Caco-2 (cell line): ENCODE measurements at regions of chr6 and their contacts with region 1.

Region 1: DNA sequence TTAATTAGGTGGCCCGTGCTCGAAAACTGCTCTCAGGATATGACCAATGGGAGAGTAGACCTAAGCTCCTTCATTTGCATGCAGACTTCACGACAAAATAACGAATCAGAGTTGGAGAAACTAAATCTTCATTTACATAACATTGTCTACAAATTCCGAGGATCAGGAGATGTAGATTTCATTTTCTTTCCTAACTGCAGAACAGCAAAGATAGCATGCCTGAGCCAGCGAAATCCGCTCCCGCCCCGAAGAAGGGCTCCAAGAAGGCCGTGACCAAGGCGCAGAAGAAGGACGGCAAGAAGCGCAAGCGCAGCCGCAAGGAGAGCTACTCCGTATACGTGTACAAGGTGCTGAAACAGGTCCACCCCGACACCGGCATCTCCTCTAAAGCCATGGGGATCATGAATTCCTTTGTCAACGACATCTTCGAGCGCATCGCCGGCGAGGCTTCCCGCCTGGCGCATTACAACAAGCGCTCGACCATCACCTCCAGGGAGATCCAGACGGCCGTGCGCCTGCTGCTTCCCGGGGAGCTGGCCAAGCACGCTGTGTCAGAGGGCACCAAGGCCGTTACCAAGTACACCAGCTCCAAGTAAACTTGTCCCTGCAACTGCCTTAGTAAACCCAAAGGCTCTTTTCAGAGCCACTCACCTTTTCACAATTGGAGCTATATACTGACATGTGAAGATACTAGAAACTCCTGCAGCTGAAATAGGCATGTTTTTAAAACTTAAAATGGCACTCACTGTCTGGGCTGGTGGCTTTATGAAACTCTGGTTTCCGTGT is 96.5 kb downstream of the HFE start:
- DNase-seq: peak; percentile 61 to 63
- H3K4me3 ChIP-seq: peak overlapping the region; percentile 41
- H3K4me3 Mint-ChIP-seq: peak overlapping the region; percentile 52
- H3K27ac Mint-ChIP-seq: peak overlapping the region; percentile 88
- H3K4me1 ChIP-seq: peaks cover 3% of the 10 kb centered on the region; the same call in 1 of the 2 replicates
- H3K4me1 Mint-ChIP-seq: peaks cover 25% of the 10 kb centered on the region
- H3K27me3 ChIP-seq: no peaks in the 10 kb centered on the region
- H3K27me3 Mint-ChIP-seq: no peaks in the 10 kb centered on the region
- CTCF ChIP-seq: no peak

Region 2: DNA sequence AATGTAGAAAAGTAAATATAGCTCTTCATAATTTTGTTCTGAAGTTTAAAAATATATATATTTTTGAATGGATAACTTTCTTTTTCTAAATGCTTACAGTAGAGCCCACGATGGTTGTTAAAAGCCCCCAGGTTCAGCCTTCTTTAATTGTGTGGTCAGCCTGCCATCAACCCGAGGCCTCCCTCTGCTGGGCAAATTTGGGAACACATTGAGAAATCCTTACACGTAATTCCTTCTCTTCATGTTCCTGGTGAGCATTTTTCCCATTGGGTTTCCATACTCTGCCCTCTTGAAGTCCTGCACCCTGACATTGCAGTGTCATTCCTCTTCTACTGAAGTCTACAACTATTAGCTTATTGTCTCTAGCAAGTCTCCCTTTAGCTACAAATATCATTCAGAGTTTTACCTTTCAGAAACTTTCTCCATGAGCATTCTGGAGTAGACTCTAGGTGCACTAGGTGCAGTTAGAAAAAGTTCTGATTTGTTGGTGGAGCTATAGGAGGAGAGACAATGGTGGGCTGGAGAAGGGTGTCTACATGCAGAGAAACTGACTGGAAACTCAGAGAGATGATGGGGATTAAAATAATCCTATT is 180.6 kb before region 1 on chr6:
- CTCF ChIA-PET with region 1: no interaction called
- POLR2A ChIA-PET with region 1: no interaction called
- intact Hi-C with region 1: no loop called
- DNase-seq: peak; percentile 49 to 79
- H3K4me3 ChIP-seq: no peak overlapping the region
- H3K4me3 Mint-ChIP-seq: no peak overlapping the region
- H3K27ac Mint-ChIP-seq: no peak overlapping the region
- H3K4me1 ChIP-seq: no peaks in the 10 kb centered on the region
- H3K4me1 Mint-ChIP-seq: peaks cover 13% of the 10 kb centered on the region
- H3K27me3 ChIP-seq: no peaks in the 10 kb centered on the region
- H3K27me3 Mint-ChIP-seq: no peaks in the 10 kb centered on the region
- CTCF ChIP-seq: peak; percentile 77 to 90

Region 3: DNA sequence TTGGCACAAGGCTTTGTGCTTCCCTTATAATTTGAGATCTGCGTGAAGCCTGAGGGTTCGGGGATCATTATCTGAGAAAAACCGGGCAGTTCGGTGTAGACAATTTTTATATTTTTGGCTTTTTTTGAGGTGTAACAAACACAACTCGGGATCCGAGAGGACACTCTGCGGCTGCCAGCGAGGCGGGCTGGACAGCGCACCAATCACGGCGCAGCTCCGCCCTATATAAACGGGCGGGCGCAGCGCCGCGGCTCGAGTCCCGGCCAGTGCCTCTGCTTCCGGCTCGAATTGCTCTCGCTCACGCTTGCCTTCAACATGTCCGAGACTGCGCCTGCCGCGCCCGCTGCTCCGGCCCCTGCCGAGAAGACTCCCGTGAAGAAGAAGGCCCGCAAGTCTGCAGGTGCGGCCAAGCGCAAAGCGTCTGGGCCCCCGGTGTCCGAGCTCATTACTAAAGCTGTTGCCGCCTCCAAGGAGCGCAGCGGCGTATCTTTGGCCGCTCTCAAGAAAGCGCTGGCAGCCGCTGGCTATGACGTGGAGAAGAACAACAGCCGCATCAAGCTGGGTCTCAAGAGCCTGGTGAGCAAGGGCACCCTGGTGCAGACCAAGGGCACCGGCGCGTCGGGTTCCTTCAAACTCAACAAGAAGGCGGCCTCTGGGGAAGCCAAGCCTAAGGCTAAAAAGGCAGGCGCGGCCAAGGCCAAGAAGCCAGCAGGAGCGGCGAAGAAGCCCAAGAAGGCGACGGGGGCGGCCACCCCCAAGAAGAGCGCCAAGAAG is 27.5 kb before region 1 on chr6:
- CTCF ChIA-PET with region 1: no interaction called
- POLR2A ChIA-PET with region 1: interaction called, 45 read pairs
- intact Hi-C with region 1: loop called (anchors 2 kb)
- DNase-seq: peak; percentile 86 to 93
- H3K4me3 ChIP-seq: peak overlapping the region; percentile 64
- H3K4me3 Mint-ChIP-seq: peak overlapping the region; percentile 86
- H3K27ac Mint-ChIP-seq: peak overlapping the region; percentile 98
- H3K4me1 ChIP-seq: peaks cover 10% of the 10 kb centered on the region
- H3K4me1 Mint-ChIP-seq: peaks cover 45% of the 10 kb centered on the region
- H3K27me3 ChIP-seq: no peaks in the 10 kb centered on the region
- H3K27me3 Mint-ChIP-seq: peaks cover 15% of the 10 kb centered on the region
- CTCF ChIP-seq: no peak

Region 4: GRCh38 chr6:26172496-26172958 is 11.2 kb before region 1 on chr6:
- CTCF ChIA-PET with region 1: interaction called, 4 read pairs
- POLR2A ChIA-PET with region 1: interaction called, 6 read pairs
- intact Hi-C with region 1: loop called (anchors 1 kb)
- DNase-seq: no peak
- H3K4me3 ChIP-seq: peak overlapping the region; percentile 53
- H3K4me3 Mint-ChIP-seq: peak overlapping the region; percentile 68
- H3K27ac Mint-ChIP-seq: peak overlapping the region; percentile 37
- H3K4me1 ChIP-seq: peaks cover 6% of the 10 kb centered on the region
- H3K4me1 Mint-ChIP-seq: peaks cover 10% of the 10 kb centered on the region
- H3K27me3 ChIP-seq: no peaks in the 10 kb centered on the region
- H3K27me3 Mint-ChIP-seq: no peaks in the 10 kb centered on the region
- CTCF ChIP-seq: no peak

Region 5: DNA sequence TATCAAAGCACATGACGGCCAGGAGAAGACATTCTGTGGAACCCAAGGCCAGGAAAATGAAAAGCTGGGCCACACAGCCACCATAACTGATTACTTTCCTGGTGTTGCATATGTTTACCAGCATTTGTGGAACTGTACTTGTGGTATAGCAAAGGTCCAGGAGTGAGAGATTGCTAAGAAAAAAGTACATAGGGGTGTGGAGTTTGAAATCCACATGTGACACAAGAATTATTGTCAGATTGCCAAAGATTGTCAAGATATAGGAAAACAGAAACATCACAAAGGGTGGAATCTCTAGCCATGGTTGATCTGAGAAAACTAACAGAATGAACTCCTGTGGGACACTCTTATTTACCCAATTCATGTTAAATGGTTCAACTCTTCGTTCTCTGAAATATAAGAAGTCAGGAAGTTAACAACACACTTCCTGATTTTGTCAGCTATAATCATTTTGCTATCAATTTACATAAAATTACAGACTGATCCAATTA is 1728.2 kb after region 1 on chr6 and contains the start of gene OR2B2:
- CTCF ChIA-PET with region 1: no interaction called
- POLR2A ChIA-PET with region 1: interaction called, 10 read pairs
- intact Hi-C with region 1: no loop called
- DNase-seq: no peak
- H3K4me3 ChIP-seq: no peak within 1 kb of the TSS
- H3K4me3 Mint-ChIP-seq: no peak within 1 kb of the TSS
- H3K27ac Mint-ChIP-seq: no peak within 1 kb of the TSS
- H3K4me1 ChIP-seq: no peaks in the 10 kb centered on the region
- H3K4me1 Mint-ChIP-seq: no peaks in the 10 kb centered on the region
- H3K27me3 ChIP-seq: no peaks in the 10 kb centered on the region
- H3K27me3 Mint-ChIP-seq: peaks cover 7% of the 10 kb centered on the region
- CTCF ChIP-seq: no peak
- total RNA-seq, gene OR2B2: not detected in 2 replicates